Activated CD4-positive, alpha-beta T cell treated with anti-CD3 and anti-CD28 coated beads for 36 hours (primary cell): ENCODE measurements at regions of chr21 and their contacts with region 1.

Region 1: GRCh38 chr21:37563641-37564340 is 197.2 kb downstream of the DYRK1A start:
- DNase-seq: peak; percentile 96
- ATAC-seq: peak; percentile 79
- H3K4me3 Mint-ChIP-seq: peak overlapping the region; percentile 88
- H3K27ac Mint-ChIP-seq: peak overlapping the region; percentile 100
- H3K4me1 Mint-ChIP-seq: peaks cover 23% of the 10 kb centered on the region
- H3K27me3 Mint-ChIP-seq: no peaks in the 10 kb centered on the region

Region 2: GRCh38 chr21:36989699-36990507 is 573.9 kb before region 1 on chr21:
- CTCF ChIA-PET with region 1: no interaction called
- POLR2A ChIA-PET with region 1: no interaction called
- intact Hi-C with region 1: loop called in 1 of 2 experiments (anchors 1 kb)
- DNase-seq: peak; percentile 94
- ATAC-seq: peak; percentile 88
- H3K4me3 Mint-ChIP-seq: peak overlapping the region; percentile 71
- H3K27ac Mint-ChIP-seq: peak overlapping the region; percentile 88
- H3K4me1 Mint-ChIP-seq: peaks cover 47% of the 10 kb centered on the region
- H3K27me3 Mint-ChIP-seq: no peaks in the 10 kb centered on the region

Region 3: GRCh38 chr21:37017951-37018679 is 545.7 kb before region 1 on chr21:
- CTCF ChIA-PET with region 1: no interaction called
- POLR2A ChIA-PET with region 1: no interaction called
- intact Hi-C with region 1: no loop called
- DNase-seq: no peak
- ATAC-seq: no peak
- H3K4me3 Mint-ChIP-seq: no peak overlapping the region
- H3K27ac Mint-ChIP-seq: no peak overlapping the region
- H3K4me1 Mint-ChIP-seq: no peaks in the 10 kb centered on the region
- H3K27me3 Mint-ChIP-seq: peaks cover 5% of the 10 kb centered on the region

Region 4: DNA sequence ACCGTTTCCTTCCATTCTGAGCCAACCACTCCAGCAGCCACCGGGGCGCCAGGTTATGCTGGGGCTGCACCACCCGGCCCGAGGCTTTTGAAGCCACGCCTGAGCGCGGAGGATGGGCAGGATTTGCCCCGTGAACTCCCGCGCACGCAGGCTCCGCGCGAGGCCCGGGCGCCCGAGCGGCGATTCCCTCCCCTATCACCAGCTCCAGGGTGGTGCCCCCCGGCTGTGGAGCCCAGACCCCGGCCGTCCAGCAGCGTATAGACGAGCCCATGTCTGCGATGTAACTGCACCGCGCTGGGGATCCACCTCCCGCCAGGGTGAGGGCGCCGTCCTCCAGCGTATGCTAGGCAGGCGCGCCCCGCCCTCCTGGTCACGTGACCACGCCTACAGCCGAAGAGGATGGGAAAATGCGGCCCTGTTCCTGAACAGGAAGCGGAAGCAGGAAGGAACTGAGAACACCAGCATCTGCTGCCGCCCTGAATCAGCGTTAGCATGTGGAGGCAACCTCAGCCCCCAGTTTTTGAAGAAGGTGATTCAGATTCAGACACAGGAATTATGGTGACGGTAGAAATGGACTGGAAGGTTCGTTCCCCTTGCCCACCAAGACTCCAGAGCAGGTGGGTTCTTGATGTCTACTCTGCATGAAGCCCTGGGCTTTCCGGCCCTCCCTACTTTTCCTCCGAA is 342.7 kb before region 1 on chr21:
- CTCF ChIA-PET with region 1: no interaction called
- POLR2A ChIA-PET with region 1: no interaction called
- intact Hi-C with region 1: loop called (anchors 1 to 5 kb)
- DNase-seq: peak; percentile 98
- ATAC-seq: peak; percentile 84
- H3K4me3 Mint-ChIP-seq: peak overlapping the region; percentile 82
- H3K27ac Mint-ChIP-seq: peak overlapping the region; percentile 97
- H3K4me1 Mint-ChIP-seq: peaks cover 47% of the 10 kb centered on the region
- H3K27me3 Mint-ChIP-seq: no peaks in the 10 kb centered on the region

Region 5: GRCh38 chr21:37267269-37268184 is 296.3 kb before region 1 on chr21 and contains the start of gene VPS26C:
- CTCF ChIA-PET with region 1: no interaction called
- POLR2A ChIA-PET with region 1: interaction called, 15 read pairs
- intact Hi-C with region 1: loop called (anchors 1 to 2 kb)
- DNase-seq: peak; percentile 99
- ATAC-seq: peak; percentile 92
- H3K4me3 Mint-ChIP-seq: peak within 1 kb of the TSS; percentile 84
- H3K27ac Mint-ChIP-seq: peak within 1 kb of the TSS; percentile 99
- H3K4me1 Mint-ChIP-seq: peaks cover 28% of the 10 kb centered on the region
- H3K27me3 Mint-ChIP-seq: no peaks in the 10 kb centered on the region
- total RNA-seq, gene VPS26C: 54.8 to 61.7 TPM

Region 6: GRCh38 chr21:37582590-37582989 is 18.8 kb after region 1 on chr21:
- CTCF ChIA-PET with region 1: interaction called, 4 read pairs
- POLR2A ChIA-PET with region 1: no interaction called
- intact Hi-C with region 1: loop called in 1 of 2 experiments (anchors 2 kb)
- DNase-seq: peak; percentile 20
- ATAC-seq: peak; percentile 57
- H3K4me3 Mint-ChIP-seq: no peak overlapping the region
- H3K27ac Mint-ChIP-seq: no peak overlapping the region
- H3K4me1 Mint-ChIP-seq: no peaks in the 10 kb centered on the region
- H3K27me3 Mint-ChIP-seq: peaks cover 10% of the 10 kb centered on the region

Region 7: DNA sequence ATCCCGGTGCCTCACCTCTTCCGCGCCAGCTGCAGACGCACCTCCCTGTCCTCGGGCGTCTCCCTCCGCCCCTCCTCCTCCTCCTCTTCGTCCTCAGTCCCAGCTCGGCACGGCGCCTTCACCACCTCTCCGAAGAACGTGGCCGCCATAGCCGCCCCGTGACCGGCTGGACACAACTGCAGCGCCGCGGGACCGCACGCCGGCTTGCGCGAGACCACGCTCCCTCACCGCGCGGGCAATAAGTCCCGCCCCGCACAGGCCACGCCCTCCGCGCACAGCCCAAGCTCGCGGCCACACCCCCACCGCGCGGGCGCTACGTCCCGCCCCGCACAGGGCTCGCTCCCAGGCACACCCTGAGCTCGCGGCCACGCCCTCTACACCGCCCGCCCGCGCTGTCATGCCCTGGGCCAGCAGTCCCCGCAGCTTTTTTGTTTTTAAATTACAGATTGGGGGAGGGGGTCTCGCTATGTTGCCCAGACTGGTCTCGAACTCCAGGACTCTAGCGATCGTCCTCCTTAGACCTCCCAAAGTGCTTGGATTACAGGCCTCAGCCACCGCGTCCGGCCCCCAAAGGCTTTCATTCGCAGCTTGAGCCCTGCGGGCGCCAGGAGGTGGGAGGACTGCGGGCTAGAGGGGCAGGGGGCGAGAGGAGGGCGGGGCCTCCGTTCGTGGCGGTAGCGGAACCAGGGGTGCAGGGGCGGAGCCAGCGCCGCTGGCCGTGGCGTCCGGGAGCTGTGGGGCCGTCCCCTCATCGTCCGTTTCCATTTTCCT is 1619.6 kb after region 1 on chr21 and contains the start of gene PSMG1:
- CTCF ChIA-PET with region 1: no interaction called
- POLR2A ChIA-PET with region 1: no interaction called
- intact Hi-C with region 1: loop called in 1 of 2 experiments (anchors 2 kb)
- DNase-seq: peak; percentile 97
- ATAC-seq: peak; percentile 92
- H3K4me3 Mint-ChIP-seq: peak within 1 kb of the TSS; percentile 95
- H3K27ac Mint-ChIP-seq: peak within 1 kb of the TSS; percentile 97
- H3K4me1 Mint-ChIP-seq: peaks cover 63% of the 10 kb centered on the region
- H3K27me3 Mint-ChIP-seq: no peaks in the 10 kb centered on the region
- total RNA-seq, gene PSMG1: 109 to 123 TPM